Endothelial cell of umbilical vein (primary cell): ENCODE measurements at regions of chr5 and their contacts with region 1.

Region 1: DNA sequence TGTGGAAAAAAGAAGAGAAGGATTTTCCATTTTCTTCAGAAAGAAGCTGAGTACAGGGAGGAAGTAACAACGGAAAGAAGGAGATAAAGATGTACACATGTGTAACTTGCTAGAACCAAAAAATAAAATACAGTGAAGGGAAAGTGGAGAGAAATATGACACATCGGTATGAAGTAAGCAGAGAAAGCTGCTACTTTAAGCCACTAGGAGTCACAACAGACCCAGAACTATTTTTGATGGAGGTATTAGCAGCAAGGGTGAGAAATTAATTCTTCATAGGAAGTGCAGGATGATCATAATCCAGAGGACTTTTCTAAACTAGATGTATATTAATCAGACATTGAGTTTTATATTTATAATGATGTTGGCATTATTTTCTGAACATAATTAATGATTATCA is 88.5 kb downstream of the FAM174A start:
- DNase-seq: peak; percentile 67
- H3K4me3 ChIP-seq: no peak overlapping the region
- H3K27ac ChIP-seq: no peak overlapping the region
- H3K4me1 ChIP-seq: peaks cover 4% of the 10 kb centered on the region
- H3K27me3 ChIP-seq: no peaks in the 10 kb centered on the region
- CTCF ChIP-seq: peak; percentile 32 to 46
- POLR2A ChIP-seq: no peak

Region 2: DNA sequence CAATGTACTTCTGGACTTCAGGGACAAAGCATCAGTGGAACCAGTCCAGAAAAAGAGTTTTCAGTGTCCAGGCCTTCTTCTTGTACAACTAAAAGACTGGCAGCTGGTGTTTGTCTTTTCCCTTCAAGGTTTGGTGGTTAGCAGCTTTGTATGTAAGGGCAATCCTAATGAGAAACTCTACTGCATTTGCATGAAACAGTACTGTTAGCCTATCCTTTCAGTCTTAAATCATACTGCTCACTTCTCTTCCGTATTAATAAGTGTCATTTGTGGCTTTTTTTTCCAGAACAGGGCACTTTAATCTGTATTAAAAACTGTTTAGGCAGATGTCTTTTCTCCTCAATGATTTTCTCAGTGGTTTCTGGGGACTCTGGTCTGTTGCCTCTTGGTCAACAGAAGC is 39.6 kb before region 1 on chr5:
- CTCF ChIA-PET with region 1: no interaction called
- POLR2A ChIA-PET with region 1: no interaction called
- dilution Hi-C with region 1: no loop called
- intact Hi-C with region 1: no loop called
- DNase-seq: no peak
- H3K4me3 ChIP-seq: no peak overlapping the region
- H3K27ac ChIP-seq: no peak overlapping the region
- H3K4me1 ChIP-seq: no peaks in the 10 kb centered on the region
- H3K27me3 ChIP-seq: no peaks in the 10 kb centered on the region
- CTCF ChIP-seq: no peak
- POLR2A ChIP-seq: no peak

Region 3: DNA sequence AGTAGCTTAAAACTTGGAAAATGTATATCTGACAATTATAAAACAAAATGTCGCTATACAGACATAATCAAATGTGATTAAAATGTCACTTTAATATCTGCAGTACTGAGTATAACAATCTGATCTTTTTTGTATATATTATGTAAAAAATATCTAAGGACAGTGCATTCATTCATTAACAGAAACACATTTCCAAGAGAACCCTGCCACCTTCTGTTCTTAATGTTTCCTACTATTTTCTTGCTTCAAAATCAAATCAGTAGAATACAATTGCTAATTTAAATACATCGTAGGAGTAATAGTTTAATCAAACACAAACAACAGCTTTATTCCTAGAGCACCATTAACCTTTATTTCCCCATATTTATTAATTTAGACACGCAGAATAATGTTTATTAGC is 422.0 kb after region 1 on chr5:
- CTCF ChIA-PET with region 1: interaction called, 12 read pairs
- POLR2A ChIA-PET with region 1: no interaction called
- dilution Hi-C with region 1: no loop called
- intact Hi-C with region 1: loop called (anchors 2 kb)
- DNase-seq: peak; percentile 55
- H3K4me3 ChIP-seq: no peak overlapping the region
- H3K27ac ChIP-seq: no peak overlapping the region
- H3K4me1 ChIP-seq: no peaks in the 10 kb centered on the region
- H3K27me3 ChIP-seq: no peaks in the 10 kb centered on the region
- CTCF ChIP-seq: no peak
- POLR2A ChIP-seq: no peak

Region 4: GRCh38 chr5:101390151-101390908 is 766.6 kb after region 1 on chr5:
- CTCF ChIA-PET with region 1: interaction called, 21 read pairs
- POLR2A ChIA-PET with region 1: no interaction called
- dilution Hi-C with region 1: no loop called
- intact Hi-C with region 1: loop called (anchors 1 kb)
- DNase-seq: peak; percentile 78
- H3K4me3 ChIP-seq: no peak overlapping the region
- H3K27ac ChIP-seq: no peak overlapping the region
- H3K4me1 ChIP-seq: no peaks in the 10 kb centered on the region
- H3K27me3 ChIP-seq: no peaks in the 10 kb centered on the region
- CTCF ChIP-seq: peak; percentile 49 to 60
- POLR2A ChIP-seq: no peak

Region 5: GRCh38 chr5:101678481-101679193 is 1054.9 kb after region 1 on chr5:
- CTCF ChIA-PET with region 1: no interaction called
- POLR2A ChIA-PET with region 1: no interaction called
- dilution Hi-C with region 1: no loop called
- intact Hi-C with region 1: loop called (anchors 5 kb)
- DNase-seq: peak; percentile 71
- H3K4me3 ChIP-seq: no peak overlapping the region
- H3K27ac ChIP-seq: no peak overlapping the region
- H3K4me1 ChIP-seq: no peaks in the 10 kb centered on the region
- H3K27me3 ChIP-seq: no peaks in the 10 kb centered on the region
- CTCF ChIP-seq: peak; percentile 82 to 93
- POLR2A ChIP-seq: no peak